Aorta (tissue), 5 donors: ENCODE measurements at regions of chr16 and their contacts with region 1.

Region 1: GRCh38 chr16:31142109-31143010 is 6.8 kb upstream of the PRSS8 start:
- DNase-seq: peak; percentile 99 to 100
- ATAC-seq: peak; percentile 99
- H3K4me3 ChIP-seq: peak overlapping the region in 1 of 2 donors; percentile 5
- H3K27ac ChIP-seq: peak overlapping the region in 1 of 2 donors; percentile 77
- H3K4me1 ChIP-seq: peaks cover 0 to 3% of the 10 kb centered on the region in 2 donors
- H3K27me3 ChIP-seq: no peaks in the 10 kb centered on the region

Region 2: GRCh38 chr16:30997000-30997886 is 145.1 kb before region 1 on chr16:
- intact Hi-C with region 1: loop called in 1 of 2 experiments (anchors 5 kb)
- DNase-seq: peak; percentile 89 to 96
- ATAC-seq: peak; percentile 93
- H3K4me3 ChIP-seq: peak overlapping the region; percentile 29 to 47
- H3K27ac ChIP-seq: peak overlapping the region; percentile 30 to 69
- H3K4me1 ChIP-seq: no peaks in the 10 kb centered on the region
- H3K27me3 ChIP-seq: no peaks in the 10 kb centered on the region

Region 3: GRCh38 chr16:31094424-31095120 is 47.8 kb before region 1 on chr16 and contains the start of gene VKORC1:
- intact Hi-C with region 1: loop called in 1 of 2 experiments (anchors 1 kb)
- DNase-seq: peak; percentile 97 to 98
- ATAC-seq: peak; percentile 95
- H3K4me3 ChIP-seq: peak within 1 kb of the TSS; percentile 58 to 78
- H3K27ac ChIP-seq: peak within 1 kb of the TSS in 1 of 2 donors; percentile 69
- H3K4me1 ChIP-seq: no peaks in the 10 kb centered on the region
- H3K27me3 ChIP-seq: no peaks in the 10 kb centered on the region
- total RNA-seq, gene VKORC1: 75.7 to 109 TPM

Region 4: DNA sequence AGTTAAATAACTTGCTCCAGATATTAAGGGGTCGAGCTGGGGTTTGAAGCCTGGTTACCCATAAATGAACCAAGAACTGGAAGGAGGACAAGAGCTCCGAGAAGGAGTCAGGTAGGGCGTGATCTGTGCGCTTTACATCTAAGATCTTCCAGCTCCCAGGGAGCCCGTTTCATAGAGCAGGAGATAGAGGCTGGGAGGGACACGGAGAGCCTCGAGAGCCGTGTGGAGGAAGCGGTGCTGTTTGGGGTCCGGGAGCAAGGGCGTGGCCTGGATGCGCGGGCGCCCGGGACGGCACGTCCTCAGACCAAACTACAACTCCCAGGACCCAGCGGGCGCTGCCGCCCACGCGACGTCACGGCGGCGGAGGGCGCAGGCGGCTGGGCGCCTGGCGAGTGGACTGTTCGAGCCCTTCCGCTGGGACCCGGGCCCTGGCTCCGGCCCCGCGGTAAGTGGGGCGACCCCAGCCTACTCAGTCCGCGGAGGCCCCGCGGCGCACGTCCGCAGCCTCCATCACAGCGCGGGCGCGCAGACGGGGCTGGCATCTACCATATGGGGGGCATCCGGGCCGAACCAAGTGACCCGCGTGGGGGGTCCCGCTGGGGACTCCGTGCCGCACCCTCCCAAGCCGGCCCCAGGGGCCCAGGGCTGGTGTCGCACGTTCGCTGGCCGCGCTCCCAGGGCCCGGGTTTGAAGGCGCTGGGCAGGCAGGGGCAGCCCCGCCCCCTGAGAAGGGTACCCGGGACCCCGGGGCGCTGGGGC is 34.1 kb before region 1 on chr16 and contains the start of gene BCKDK:
- intact Hi-C with region 1: loop called in 1 of 2 experiments (anchors 5 kb)
- DNase-seq: peak; percentile 90 to 92
- ATAC-seq: peak; percentile 88
- H3K4me3 ChIP-seq: peak within 1 kb of the TSS; percentile 46 to 76
- H3K27ac ChIP-seq: peak within 1 kb of the TSS; percentile 38 to 71
- H3K4me1 ChIP-seq: no peaks in the 10 kb centered on the region
- H3K27me3 ChIP-seq: no peaks in the 10 kb centered on the region
- total RNA-seq, gene BCKDK: 28.6 to 37.2 TPM

Region 5: GRCh38 chr16:31179747-31180459 is 37.5 kb after region 1 on chr16 and contains the start of gene FUS:
- intact Hi-C with region 1: loop called in 1 of 2 experiments (anchors 1 kb)
- DNase-seq: peak; percentile 94 to 97
- ATAC-seq: peak; percentile 98
- H3K4me3 ChIP-seq: peak within 1 kb of the TSS; percentile 45 to 85
- H3K27ac ChIP-seq: peak within 1 kb of the TSS in 1 of 2 donors; percentile 76
- H3K4me1 ChIP-seq: peaks cover 0 to 5% of the 10 kb centered on the region in 2 donors
- H3K27me3 ChIP-seq: peaks cover 0 to 2% of the 10 kb centered on the region in 2 donors
- total RNA-seq, gene FUS: 243 to 254 TPM